ENCODE measurements at regions of chr10 and their contacts with region 1.

Region 1: DNA sequence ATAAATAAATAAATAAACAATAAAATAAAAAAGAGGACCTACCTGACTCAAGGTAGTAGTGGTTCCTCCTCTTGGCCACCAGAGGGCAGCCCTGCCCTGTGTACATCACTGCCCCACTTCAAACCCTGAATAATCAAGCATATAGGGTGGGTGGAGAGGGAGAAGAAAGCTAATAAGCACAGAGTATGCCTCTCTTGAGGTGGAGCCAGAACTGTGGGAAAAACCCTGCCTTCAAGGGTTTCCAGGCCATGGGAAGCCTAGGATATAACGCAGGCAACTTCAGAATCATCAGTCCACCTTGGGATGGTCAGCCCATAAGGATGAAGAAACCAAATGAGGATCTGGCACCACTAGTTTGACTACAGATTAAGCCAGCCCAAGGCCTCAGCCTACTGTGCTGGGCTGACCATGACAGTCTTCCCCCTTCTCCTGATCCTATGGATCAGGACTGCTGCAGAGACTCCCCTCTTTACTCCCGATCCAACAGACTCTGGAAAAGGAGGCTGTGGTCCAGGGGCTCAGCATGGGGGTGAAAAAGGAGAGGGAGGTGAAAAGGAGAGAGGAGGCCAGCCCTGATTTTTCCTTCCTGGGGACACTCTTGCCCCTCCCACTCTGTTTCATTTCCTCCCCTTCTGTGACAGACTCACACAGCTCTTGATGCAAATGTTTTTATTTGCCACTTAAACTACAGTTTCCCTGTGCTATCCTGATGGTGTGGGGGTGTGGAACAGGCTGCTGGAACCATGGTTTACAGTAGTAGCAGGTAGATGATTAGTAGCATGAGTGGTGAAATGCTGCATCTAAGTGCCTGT is 10.1 kb downstream of the AVPI1 start:
- DNase-seq: peak in 1 of 4 donors; percentile 61
- ATAC-seq: peak; percentile 92
- H3K4me3 ChIP-seq: no peak overlapping the region
- H3K27ac ChIP-seq: no peak overlapping the region
- H3K4me1 ChIP-seq: peaks cover 0 to 4% of the 10 kb centered on the region in 2 donors
- H3K27me3 ChIP-seq: no peaks in the 10 kb centered on the region
- CTCF ChIP-seq: peak; percentile 83 to 87

Region 2: GRCh38 chr10:97736902-97737769 is 60.2 kb after region 1 on chr10 and contains the start of gene ZFYVE27:
- intact Hi-C with region 1: loop called in 1 of 2 experiments (anchors 10 kb)
- DNase-seq: peak; percentile 93 to 99 (median 98)
- ATAC-seq: peak; percentile 95
- H3K4me3 ChIP-seq: peak within 1 kb of the TSS; percentile 94 to 97
- H3K27ac ChIP-seq: peak within 1 kb of the TSS; percentile 88 to 97
- H3K4me1 ChIP-seq: peaks cover 14 to 25% of the 10 kb centered on the region in 2 donors
- H3K27me3 ChIP-seq: no peaks in the 10 kb centered on the region
- CTCF ChIP-seq: no peak
- polyA plus RNA-seq, gene ZFYVE27: 26.8 to 35.5 (median 28.2) TPM

Measured in left lung (tissue), 14 donors.